HEK293 (cell line): ENCODE measurements at regions of chr16 and their contacts with region 1.

Region 1: DNA sequence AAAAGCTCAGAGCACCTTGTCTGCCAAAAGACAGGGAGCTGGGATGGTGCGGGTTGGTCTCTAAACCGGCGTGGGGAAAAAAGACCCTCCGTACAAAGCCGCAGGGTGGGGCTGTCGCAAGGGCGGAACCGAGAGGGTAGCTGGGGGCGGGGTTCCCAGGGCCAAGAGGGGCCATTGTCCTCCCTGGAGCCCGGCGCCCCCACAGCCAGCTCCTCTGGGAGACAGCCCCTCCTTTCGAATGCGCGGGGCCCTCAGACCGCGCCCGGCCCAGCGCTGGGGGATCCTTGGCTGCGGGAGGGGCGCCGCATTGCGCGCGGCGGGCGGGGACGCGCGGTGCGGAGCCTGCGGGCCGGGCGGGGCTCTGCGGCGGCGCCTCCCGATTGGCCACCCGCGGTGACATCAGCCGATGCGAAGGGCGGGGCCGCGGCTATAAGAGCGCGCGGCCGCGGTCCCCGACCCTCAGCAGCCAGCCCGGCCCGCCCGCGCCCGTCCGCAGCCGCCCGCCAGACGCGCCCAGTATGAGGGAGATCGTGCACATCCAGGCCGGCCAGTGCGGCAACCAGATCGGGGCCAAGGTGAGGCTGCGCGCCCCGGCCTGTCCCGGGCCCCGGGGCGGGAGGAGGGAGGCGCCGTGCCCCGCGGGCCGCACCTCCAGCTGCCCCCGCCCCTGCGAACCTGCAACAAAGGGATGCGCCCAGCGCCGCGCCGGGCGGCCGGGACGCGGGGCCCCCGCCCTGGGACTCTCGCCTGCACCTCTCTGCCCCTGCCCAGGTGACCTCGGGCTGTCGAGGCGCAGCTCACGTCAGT is at the start of gene TUBB3:
- H3K4me3 ChIP-seq: peak within 1 kb of the TSS; percentile 38
- H3K27ac ChIP-seq: peak within 1 kb of the TSS; percentile 70
- H3K4me1 ChIP-seq: peaks cover 22% of the 10 kb centered on the region
- CTCF ChIP-seq: peak; percentile 57; the same call in 1 of the 2 replicates

Region 2: GRCh38 chr16:89909777-89910716 is 13.0 kb before region 1 on chr16:
- CTCF ChIA-PET with region 1: interaction called, 16 read pairs
- POLR2A ChIA-PET with region 1: interaction called, 15 read pairs
- H3K4me3 ChIP-seq: no peak overlapping the region
- H3K27ac ChIP-seq: no peak overlapping the region
- H3K4me1 ChIP-seq: no peaks in the 10 kb centered on the region
- CTCF ChIP-seq: peak; percentile 79

Region 3: DNA sequence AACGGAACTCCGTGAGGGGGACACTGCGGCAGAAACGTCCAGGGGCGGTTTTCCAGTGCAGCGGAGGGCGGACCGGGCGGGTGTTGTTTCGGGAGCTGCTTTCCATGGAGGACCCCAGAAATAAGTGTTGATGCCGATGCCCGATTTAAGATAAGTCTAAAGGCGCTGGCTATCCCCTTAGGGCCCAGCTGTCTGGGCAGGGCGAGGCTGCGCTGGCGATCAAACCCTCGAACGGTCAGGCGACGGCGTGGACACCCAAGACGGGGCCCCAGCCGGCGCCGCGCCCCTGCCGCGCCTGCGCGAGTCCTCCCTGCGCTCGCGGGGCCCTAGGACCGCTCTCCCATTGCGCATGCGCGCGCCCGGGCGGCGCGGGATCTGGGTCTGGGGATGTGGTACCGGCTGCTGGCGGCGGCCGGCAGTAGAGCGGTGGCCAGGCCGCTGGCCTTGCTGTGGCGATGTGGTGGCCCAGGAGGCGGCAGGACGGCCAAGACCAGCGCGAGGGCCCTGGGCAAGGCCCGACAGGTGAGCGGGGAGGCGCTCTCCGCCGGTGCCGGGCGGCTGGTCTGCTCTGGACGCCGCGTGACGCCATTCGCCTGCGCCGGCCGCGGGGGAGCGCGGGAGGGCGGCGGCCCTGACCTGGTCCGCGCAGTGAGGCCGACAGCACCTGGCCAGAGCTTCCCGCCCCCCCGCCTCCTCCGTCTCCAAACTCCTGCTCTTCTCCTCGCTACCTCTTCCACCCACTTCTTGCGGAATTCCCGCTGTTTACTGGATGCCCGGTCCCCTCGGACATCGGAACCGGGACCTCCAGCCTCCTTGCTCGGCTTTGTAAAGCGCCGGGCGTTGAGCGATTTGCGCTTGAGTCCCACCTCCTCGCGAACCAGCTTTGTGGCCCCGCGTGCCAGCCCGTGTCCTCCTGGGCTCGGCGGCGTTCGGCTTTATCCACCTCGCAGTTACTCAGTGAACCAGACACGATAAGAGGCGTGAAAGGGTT is 49.5 kb after region 1 on chr16:
- CTCF ChIA-PET with region 1: no interaction called
- POLR2A ChIA-PET with region 1: interaction called, 32 read pairs
- H3K4me3 ChIP-seq: peak overlapping the region; percentile 100
- H3K27ac ChIP-seq: peak overlapping the region; percentile 90
- H3K4me1 ChIP-seq: 0 out of 2 replicates have a peak, but pooled peaks cover 3% of the 10 kb centered on the region
- CTCF ChIP-seq: peak; percentile 77

Region 4: GRCh38 chr16:90019543-90020259 is 96.6 kb after region 1 on chr16:
- CTCF ChIA-PET with region 1: interaction called, 3 read pairs
- POLR2A ChIA-PET with region 1: interaction called, 14 read pairs
- H3K4me3 ChIP-seq: peak overlapping the region; percentile 48
- H3K27ac ChIP-seq: peak overlapping the region; percentile 84
- H3K4me1 ChIP-seq: peaks cover 20% of the 10 kb centered on the region
- CTCF ChIP-seq: peak; percentile 31; the same call in 1 of the 2 replicates